ENCODE measurements at regions of chr5 and their contacts with region 1.

Region 1: GRCh38 chr5:169029661-169030274 is 271.2 kb downstream of the SLIT3 start:
- DNase-seq: no peak
- H3K4me3 ChIP-seq: no peak overlapping the region
- H3K27ac ChIP-seq: no peak overlapping the region
- H3K4me1 ChIP-seq: no peaks in the 10 kb centered on the region
- H3K27me3 ChIP-seq: no peaks in the 10 kb centered on the region
- CTCF ChIP-seq: no peak

Region 2: DNA sequence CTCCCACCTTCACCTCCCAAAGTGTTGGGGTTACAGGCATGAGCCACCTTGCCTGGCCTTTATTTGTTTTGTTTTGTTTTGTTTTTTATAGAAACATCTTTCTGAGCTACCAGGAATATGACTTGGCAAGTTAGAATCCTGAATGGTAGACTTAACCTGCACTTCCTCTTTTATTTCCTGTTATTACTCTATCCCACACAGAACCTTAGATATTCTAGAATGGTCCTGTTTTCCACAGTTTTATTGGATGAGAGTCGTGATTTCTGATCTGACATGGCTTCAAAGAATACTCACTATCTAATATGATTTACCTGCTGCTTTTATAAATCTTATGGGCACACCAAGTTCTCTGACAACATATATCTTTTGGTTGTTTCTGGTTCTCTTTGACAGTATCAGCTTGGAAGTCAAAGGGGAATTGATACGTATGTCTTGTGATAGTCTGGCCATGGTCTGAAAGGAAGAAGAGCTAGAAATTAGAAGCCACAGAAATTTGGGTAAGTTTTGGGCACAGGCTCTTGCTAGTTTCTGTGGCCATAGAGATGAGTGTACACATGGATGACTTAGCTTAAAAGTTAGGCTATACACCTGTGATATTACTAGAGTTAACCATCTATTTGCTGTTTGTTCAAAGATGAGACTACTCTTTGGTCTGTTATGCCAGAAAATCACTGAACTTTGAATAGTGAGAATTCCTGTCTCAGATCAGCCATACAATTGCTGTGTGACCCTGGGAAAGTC is 445.9 kb before region 1 on chr5:
- CTCF ChIA-PET with region 1: no interaction called
- dilution Hi-C with region 1: no loop called
- in situ Hi-C with region 1: no loop called
- intact Hi-C with region 1: no loop called
- DNase-seq: no peak
- H3K4me3 ChIP-seq: no peak overlapping the region
- H3K27ac ChIP-seq: no peak overlapping the region
- H3K4me1 ChIP-seq: peaks cover 8% of the 10 kb centered on the region
- H3K27me3 ChIP-seq: no peaks in the 10 kb centered on the region
- CTCF ChIP-seq: no peak

Region 3: GRCh38 chr5:169070407-169070806 is 40.6 kb after region 1 on chr5:
- CTCF ChIA-PET with region 1: no interaction called
- dilution Hi-C with region 1: loop called (anchors 5 kb)
- in situ Hi-C with region 1: no loop called
- intact Hi-C with region 1: no loop called
- DNase-seq: no peak
- H3K4me3 ChIP-seq: no peak overlapping the region
- H3K27ac ChIP-seq: no peak overlapping the region
- H3K4me1 ChIP-seq: no peaks in the 10 kb centered on the region
- H3K27me3 ChIP-seq: no peaks in the 10 kb centered on the region
- CTCF ChIP-seq: no peak

Region 4: GRCh38 chr5:169300468-169301385 is 271.0 kb after region 1 on chr5 and contains the start of gene SLIT3:
- CTCF ChIA-PET with region 1: no interaction called
- dilution Hi-C with region 1: no loop called
- in situ Hi-C with region 1: no loop called
- intact Hi-C with region 1: no loop called
- DNase-seq: peak; percentile 86
- H3K4me3 ChIP-seq: peak within 1 kb of the TSS; percentile 54 to 69 (median 55)
- H3K27ac ChIP-seq: peak within 1 kb of the TSS; percentile 26
- H3K4me1 ChIP-seq: peaks cover 38% of the 10 kb centered on the region
- H3K27me3 ChIP-seq: no peaks in the 10 kb centered on the region
- CTCF ChIP-seq: no peak
- total RNA-seq, gene SLIT3: 14.7 to 25.1 TPM

Measured in mammary epithelial cell (primary cell).